Naive thymus-derived CD8-positive, alpha-beta T cell (primary cell): ENCODE measurements at regions of chr2 and their contacts with region 1.

Region 1: GRCh38 chr2:37648331-37649011 is 23.0 kb downstream of the CDC42EP3 start:
- DNase-seq: peak in 5 of 10 donors; percentile 32 to 50 (median 34)
- ATAC-seq: peak; percentile 70 to 79
- H3K4me3 Mint-ChIP-seq: peak overlapping the region; percentile 42 to 87 (median 72)
- H3K27ac Mint-ChIP-seq: peak overlapping the region; percentile 87 to 97 (median 94)
- H3K4me1 Mint-ChIP-seq: peaks cover 50 to 94% (median 92%) of the 10 kb centered on the region in 4 donors
- H3K27me3 Mint-ChIP-seq: no peaks in the 10 kb centered on the region

Region 2: DNA sequence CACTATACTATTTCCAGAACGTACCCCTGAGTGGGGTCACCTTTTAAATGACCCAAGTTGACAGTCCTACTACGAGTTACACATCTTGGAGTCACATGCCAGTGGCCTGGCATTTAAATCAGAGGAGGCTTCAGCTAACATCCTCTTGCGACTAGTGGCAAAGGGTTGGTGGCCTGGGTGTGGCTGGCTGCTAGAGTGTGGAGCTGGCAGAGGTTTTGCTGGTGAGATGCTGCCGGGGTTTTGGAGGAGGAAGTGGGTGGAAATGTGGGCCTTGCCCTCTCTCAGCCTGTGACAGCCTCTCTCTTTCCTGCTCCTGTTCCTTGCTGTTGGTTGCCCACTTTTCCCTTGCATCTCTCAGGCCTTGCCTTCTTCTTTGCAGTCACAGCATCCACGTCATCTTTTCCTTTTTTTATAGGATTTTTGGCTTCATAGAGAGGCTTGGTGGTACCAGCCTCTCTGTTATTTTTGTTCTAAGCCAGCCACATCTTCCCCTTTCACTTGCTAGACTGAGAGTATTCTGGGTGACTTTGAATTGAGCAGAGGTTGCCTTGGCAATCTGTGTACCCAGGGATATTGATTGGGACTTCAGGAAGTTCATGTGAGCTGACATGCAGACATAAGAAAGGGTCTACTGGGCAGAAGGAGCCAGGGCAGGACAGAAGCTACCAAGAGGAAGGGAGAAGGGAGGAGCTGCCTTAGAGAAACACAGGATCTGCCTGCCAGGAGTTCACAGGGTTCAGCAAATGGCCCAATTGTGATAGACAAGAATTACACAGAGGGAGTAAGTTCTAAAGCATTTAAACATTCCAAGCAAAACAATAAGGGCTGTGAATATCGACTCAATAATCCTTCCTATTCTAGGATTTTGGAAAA is 32.4 kb before region 1 on chr2:
- POLR2A ChIA-PET with region 1: interaction called, 15 read pairs
- DNase-seq: peak; percentile 10 to 84 (median 64)
- ATAC-seq: peak; percentile 98 to 99
- H3K4me3 Mint-ChIP-seq: peak overlapping the region in 9 of 10 donors; percentile 5 to 67 (median 51)
- H3K27ac Mint-ChIP-seq: peak overlapping the region; percentile 75 to 95 (median 92)
- H3K4me1 Mint-ChIP-seq: peaks cover 33 to 57% (median 45%) of the 10 kb centered on the region in 4 donors
- H3K27me3 Mint-ChIP-seq: no peaks in the 10 kb centered on the region

Region 3: DNA sequence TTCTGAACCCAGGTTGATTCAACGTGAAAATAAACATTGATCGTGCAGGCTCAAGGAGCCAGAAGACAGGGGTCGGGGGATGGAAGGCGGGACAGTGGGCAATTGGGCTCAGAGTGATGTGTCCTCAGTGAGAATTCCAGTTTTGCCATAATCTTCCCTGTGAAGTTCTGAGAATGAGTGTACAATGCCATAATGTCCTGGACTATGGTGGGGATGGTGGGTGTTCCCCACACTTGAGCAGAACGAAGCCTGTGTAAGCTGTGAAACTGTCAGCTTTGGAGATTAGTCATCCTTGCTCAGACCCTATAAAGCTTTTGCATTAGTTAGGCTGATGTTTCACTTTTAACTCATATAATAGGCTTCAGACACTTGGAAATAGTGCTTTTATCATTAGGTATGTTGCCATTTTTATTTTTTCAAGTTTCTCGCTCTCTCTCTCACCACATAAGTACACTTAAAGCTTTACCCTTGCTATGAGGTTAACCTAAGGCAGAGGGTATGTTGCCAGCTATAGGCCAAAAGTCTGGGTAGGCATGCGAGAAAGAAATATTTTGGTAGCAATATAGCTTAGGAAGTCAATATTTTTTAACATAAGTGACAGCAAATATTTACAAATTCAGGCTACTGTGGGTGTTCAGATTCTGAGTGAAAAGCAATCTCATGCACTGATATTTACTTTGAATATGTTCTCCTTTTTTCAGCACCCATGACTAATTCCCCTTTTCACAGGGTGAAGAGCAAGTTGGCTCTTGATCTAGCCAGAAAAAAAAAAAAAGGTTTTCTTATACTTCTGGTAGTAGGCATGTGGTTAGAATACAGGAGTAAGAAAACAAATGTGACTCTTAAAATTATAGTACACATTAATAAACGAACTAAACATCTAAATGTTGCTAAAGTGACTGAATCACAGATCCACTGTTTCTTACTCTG is 24.2 kb before region 1 on chr2:
- POLR2A ChIA-PET with region 1: interaction called, 15 read pairs
- DNase-seq: no peak
- ATAC-seq: peak in 1 of 2 donors; percentile 38
- H3K4me3 Mint-ChIP-seq: peak overlapping the region; percentile 9 to 79 (median 66)
- H3K27ac Mint-ChIP-seq: peak overlapping the region; percentile 51 to 98 (median 90)
- H3K4me1 Mint-ChIP-seq: peaks cover 40 to 65% (median 56%) of the 10 kb centered on the region in 4 donors
- H3K27me3 Mint-ChIP-seq: no peaks in the 10 kb centered on the region

Region 4: DNA sequence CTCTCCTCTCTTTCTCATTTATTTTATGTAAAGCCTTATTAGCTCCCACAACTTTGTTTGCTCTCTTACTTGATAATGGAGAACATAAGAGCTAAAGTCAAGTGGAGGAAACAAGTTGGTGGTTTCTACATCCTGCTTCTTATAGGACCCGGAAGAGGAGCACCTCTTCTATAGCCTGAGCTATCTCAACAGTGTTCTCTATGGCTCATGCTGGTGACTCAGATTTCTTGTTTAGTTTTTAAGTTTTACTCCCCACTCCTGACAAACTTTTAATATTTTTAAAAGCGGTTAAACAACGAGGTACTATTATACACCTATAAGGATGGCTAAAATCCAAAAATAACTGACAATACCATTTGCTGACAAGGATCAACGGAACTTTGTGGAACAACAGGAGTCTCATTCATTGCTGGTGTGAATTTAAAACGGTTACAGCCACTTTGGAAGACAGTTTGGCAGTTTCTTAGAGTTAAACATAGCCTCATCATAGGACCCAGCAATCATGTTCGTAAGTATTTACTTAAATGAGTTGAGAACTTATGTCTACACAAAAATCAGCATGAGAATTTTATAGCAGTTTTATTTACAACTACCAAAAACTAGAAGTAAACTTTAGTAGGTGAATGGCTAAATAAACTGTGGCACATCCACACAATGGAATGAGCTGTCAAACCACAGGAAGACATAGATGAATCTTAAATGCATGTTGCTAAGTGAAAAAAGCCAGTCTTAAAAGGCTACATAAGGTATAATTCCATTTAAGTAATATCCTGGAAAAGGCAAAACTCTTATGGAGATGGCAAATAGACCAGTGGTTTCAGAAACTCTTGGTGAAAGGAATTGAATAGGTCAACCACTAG is 35.7 kb after region 1 on chr2:
- POLR2A ChIA-PET with region 1: no interaction called
- DNase-seq: peak in 4 of 10 donors; percentile 18 to 61 (median 50)
- ATAC-seq: peak; percentile 100
- H3K4me3 Mint-ChIP-seq: peak overlapping the region in 9 of 10 donors; percentile 57 to 81 (median 66)
- H3K27ac Mint-ChIP-seq: peak overlapping the region; percentile 55 to 98 (median 88)
- H3K4me1 Mint-ChIP-seq: peaks cover 19 to 38% (median 35%) of the 10 kb centered on the region in 4 donors
- H3K27me3 Mint-ChIP-seq: no peaks in the 10 kb centered on the region